Calu3 (cell line): ENCODE measurements at regions of chr20 and their contacts with region 1.

Region 1: GRCh38 chr20:48986899-48987298 is 59.2 kb upstream of the CSE1L start:
- DNase-seq: peak; percentile 47
- H3K4me3 Mint-ChIP-seq: no peak overlapping the region
- H3K27ac Mint-ChIP-seq: no peak overlapping the region
- H3K4me1 Mint-ChIP-seq: peaks cover 17% of the 10 kb centered on the region
- H3K27me3 Mint-ChIP-seq: no peaks in the 10 kb centered on the region
- CTCF ChIP-seq: peak; percentile 68

Region 2: GRCh38 chr20:48945851-48946514 is 40.9 kb before region 1 on chr20:
- CTCF ChIA-PET with region 1: interaction called, 5 read pairs
- intact Hi-C with region 1: loop called (anchors 5 kb)
- DNase-seq: peak; percentile 95
- H3K4me3 Mint-ChIP-seq: peak overlapping the region; percentile 29
- H3K27ac Mint-ChIP-seq: peak overlapping the region; percentile 63
- H3K4me1 Mint-ChIP-seq: peaks cover 34% of the 10 kb centered on the region
- H3K27me3 Mint-ChIP-seq: no peaks in the 10 kb centered on the region
- CTCF ChIP-seq: no peak

Region 3: GRCh38 chr20:49009899-49010631 is 23.2 kb after region 1 on chr20:
- CTCF ChIA-PET with region 1: interaction called, 3 read pairs
- intact Hi-C with region 1: loop called (anchors 2 kb)
- DNase-seq: no peak
- H3K4me3 Mint-ChIP-seq: no peak overlapping the region
- H3K27ac Mint-ChIP-seq: peak overlapping the region; percentile 33
- H3K4me1 Mint-ChIP-seq: peaks cover 42% of the 10 kb centered on the region
- H3K27me3 Mint-ChIP-seq: no peaks in the 10 kb centered on the region
- CTCF ChIP-seq: no peak

Region 4: DNA sequence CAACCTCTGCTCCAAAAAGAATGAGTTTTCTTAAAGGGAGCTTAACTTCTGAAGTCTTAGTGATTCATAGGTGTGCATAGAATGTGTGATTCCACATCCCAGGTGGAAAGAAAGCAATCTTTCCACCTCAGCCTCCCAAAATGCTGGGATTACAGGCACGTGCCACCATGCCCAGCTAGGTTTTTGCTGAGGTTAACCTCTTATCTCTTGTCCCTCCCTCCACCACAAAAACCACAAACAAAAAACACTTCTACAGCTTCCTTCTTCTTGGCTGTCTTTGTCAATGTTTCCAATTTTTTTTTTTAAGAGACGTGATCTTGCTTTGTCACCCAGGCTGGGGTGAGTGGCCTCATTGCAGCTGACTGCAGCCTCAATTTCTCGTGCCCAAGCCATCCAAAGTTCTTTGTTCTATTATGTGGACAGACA is 51.1 kb after region 1 on chr20:
- CTCF ChIA-PET with region 1: no interaction called
- intact Hi-C with region 1: no loop called
- DNase-seq: peak; percentile 18
- H3K4me3 Mint-ChIP-seq: no peak overlapping the region
- H3K27ac Mint-ChIP-seq: no peak overlapping the region
- H3K4me1 Mint-ChIP-seq: peaks cover 10% of the 10 kb centered on the region
- H3K27me3 Mint-ChIP-seq: no peaks in the 10 kb centered on the region
- CTCF ChIP-seq: no peak